Esophagus squamous epithelium (tissue), 5 donors: ENCODE measurements at regions of chr7 and their contacts with region 1.

Region 1: DNA sequence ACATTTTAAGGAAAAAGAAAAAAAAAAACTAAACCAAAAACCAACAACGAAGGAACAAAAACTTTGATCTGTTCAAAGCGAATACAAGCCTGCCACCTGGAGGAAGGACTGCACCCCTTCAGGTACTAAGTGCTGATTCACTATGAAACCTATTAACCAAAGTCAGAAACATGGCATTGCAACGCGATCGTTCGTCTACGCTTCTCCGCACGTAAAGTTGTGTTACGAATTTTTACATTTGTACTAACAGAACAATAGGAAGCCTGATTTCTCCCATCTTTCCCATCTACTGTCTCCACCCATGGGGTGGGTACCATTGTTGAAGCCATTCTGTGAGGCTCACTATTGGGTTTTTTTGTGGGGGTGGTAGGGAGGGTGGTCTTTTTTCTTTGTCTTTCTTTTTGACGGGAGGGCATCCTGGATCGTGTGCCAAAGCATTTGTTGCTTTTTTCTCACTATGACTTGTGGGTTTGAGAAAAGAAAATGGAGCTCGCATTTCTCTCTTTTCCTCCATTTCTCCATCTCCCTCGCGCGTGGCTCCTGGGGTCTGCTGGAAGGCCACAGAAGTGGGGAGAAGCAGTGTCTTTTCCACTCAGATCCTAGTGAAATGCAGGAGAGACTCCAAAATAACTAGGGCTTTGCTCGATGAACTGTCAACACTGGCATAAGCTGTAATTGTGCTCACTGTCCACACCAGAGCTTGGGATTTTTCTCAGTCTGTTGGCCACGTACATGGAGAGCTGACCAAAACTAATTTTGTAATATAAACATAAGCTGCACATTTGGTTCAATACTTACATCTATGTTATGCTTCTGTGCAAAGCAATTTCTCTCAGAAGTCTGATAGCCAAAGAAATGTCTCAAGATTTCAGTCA is 100.9 kb upstream of the YAE1 start:
- DNase-seq: no peak
- H3K4me3 ChIP-seq: no peak overlapping the region
- H3K27ac ChIP-seq: no peak overlapping the region
- H3K4me1 ChIP-seq: peaks cover 0 to 14% (median 0%) of the 10 kb centered on the region in 3 donors
- H3K27me3 ChIP-seq: peaks cover 0 to 15% (median 0%) of the 10 kb centered on the region in 4 donors
- CTCF ChIP-seq: peak; percentile 27 to 76 (median 65)
- POLR2A ChIP-seq: no peak

Region 2: DNA sequence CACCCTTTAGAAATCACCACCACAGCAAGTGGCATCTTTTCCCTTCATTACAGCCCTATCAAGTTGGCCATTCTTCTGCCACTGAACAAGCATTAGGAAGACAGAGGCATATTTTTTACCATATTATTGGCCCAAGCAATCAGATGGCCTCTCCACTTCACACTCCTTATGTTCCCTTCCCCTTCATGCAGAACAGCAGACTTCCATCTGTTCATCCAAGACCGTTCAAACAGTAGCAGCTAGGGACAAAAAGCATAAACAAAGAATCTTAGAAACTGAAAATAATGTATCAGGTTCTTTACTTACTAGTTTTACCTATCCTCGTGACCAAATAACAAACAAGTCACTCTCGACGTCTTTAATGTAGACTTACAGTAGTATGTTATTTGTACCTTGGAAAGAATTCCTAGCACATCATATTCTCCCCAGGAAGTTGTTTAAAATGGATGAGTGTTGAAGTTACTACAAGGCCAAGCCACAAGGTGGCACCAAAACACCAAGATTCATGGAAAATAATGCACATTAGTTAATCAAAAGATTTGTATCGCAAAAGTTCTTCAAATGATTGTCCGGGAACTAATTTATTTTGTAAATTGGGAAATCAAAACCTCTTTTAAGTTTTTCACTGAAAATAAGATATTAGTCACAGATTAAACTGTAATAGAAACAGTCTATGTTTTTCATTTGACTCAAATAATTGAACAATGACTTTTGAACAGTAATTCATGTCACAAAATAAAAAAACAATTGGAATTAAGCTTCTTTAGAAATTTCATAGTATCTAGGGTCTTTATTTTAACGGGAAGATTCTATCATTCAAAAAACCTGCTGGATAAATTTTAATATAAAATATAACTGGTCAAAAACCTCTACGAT is 668.4 kb before region 1 on chr7:
- intact Hi-C with region 1: loop called (anchors 10 kb)
- DNase-seq: no peak
- H3K4me3 ChIP-seq: no peak overlapping the region
- H3K27ac ChIP-seq: no peak overlapping the region
- H3K4me1 ChIP-seq: no peaks in the 10 kb centered on the region
- H3K27me3 ChIP-seq: no peaks in the 10 kb centered on the region
- CTCF ChIP-seq: peak in 5 of 6 experiments; percentile 58 to 81 (median 68)
- POLR2A ChIP-seq: no peak

Region 3: GRCh38 chr7:38932509-38933168 is 532.7 kb before region 1 on chr7:
- intact Hi-C with region 1: loop called (anchors 10 kb)
- DNase-seq: no peak
- H3K4me3 ChIP-seq: no peak overlapping the region
- H3K27ac ChIP-seq: no peak overlapping the region
- H3K4me1 ChIP-seq: no peaks in the 10 kb centered on the region
- H3K27me3 ChIP-seq: no peaks in the 10 kb centered on the region
- CTCF ChIP-seq: peak; percentile 48 to 81 (median 65)
- POLR2A ChIP-seq: no peak